ENCODE measurements at regions of chr15 and their contacts with region 1.

Region 1: DNA sequence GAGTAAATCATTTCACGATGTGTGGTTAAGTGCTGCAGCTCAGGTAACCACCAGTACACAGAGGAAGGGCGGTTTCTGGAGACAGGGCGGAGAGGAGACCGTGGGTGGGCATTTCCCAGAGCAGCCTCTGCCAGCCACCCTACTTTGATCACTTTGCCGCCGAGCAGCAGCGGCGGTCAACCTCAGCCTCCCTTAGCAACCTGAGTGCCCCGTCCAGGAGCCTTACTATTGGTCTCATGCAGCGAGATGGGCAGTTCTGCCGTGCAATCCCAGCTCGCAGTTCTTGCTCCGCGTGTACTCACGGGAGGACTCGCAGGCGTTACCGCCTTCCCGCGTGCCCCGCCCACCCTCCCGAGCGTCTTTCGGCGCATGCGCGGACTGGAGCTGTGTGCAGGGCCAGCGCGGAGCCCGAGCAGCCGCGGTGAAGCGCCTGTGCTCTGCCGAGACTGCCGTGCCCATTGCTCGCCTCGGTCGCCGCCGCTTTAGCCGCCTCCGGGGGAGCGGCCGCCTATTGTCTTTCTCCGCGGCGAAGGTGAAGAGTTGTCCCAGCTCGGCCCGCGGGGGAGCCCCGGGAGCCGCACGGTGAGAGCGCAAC is at the start of gene AKAP13:
- DNase-seq: peak; percentile 95
- H3K4me3 Mint-ChIP-seq: peak within 1 kb of the TSS; percentile 88
- H3K27ac Mint-ChIP-seq: peak within 1 kb of the TSS; percentile 86
- H3K4me1 Mint-ChIP-seq: peaks cover 48% of the 10 kb centered on the region
- H3K27me3 Mint-ChIP-seq: peaks cover 6% of the 10 kb centered on the region
- total RNA-seq, gene AKAP13: 92.1 and 107 TPM in 2 replicates

Region 2: GRCh38 chr15:85318048-85318731 is 62.1 kb before region 1 on chr15:
- intact Hi-C with region 1: loop called (anchors 2 kb)
- DNase-seq: peak; percentile 55
- H3K4me3 Mint-ChIP-seq: peak overlapping the region; percentile 41
- H3K27ac Mint-ChIP-seq: peak overlapping the region; percentile 91
- H3K4me1 Mint-ChIP-seq: peaks cover 66% of the 10 kb centered on the region
- H3K27me3 Mint-ChIP-seq: no peaks in the 10 kb centered on the region

Region 3: DNA sequence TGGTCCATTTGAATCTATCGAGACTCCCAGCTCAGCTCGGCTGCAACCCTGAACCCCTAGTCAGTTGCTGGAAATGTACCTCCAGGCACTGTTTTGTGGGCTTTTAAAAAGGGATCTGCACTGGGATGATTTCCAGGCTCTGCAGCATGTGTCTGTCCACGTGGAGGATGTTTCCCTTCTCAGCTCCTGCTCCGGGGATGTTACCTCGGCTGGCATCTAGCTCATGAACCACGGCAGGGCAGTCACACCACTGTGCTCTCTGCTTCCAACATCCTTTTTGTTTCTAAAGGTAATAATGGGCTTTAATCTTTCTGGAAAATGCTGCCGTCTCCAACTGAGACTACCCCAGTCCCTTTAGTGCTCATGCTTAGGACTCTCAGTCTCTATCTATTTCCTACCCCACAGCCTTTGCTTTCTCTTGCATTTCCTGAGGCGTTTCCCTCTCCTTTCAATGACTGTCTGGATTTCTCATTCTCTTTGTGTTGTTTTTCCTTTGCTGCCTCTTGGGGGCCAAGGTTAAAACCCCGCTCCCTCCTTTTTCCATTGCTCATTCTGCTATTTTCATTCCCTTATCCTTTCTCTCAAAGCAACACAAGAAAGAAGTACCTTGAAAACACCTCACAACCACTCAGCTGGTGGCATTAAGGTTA is 42.8 kb before region 1 on chr15:
- intact Hi-C with region 1: no loop called
- DNase-seq: no peak
- H3K4me3 Mint-ChIP-seq: no peak overlapping the region
- H3K27ac Mint-ChIP-seq: no peak overlapping the region
- H3K4me1 Mint-ChIP-seq: peaks cover 7% of the 10 kb centered on the region
- H3K27me3 Mint-ChIP-seq: no peaks in the 10 kb centered on the region

Region 4: DNA sequence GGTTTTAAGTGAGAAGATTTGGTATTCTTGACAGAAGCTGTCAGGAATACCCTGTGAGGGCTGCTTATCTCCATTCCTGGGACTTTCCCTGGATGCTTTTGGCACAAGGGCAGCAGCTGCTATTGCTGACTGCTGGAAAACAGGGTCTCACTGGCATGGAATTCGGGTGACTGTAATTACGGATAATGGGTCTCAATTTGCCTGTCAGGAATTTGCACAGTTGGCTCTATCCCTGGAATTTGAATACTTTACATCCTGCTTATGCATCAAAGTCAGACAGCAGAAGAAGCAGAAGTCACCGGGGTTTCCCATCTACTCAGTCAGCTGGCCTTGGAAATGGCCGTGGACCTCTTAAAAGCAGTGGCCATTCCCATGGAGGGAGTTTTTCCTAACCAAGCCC is 25.9 kb before region 1 on chr15:
- intact Hi-C with region 1: loop called (anchors 1 kb)
- DNase-seq: no peak
- H3K4me3 Mint-ChIP-seq: no peak overlapping the region
- H3K27ac Mint-ChIP-seq: no peak overlapping the region
- H3K4me1 Mint-ChIP-seq: peaks cover 19% of the 10 kb centered on the region
- H3K27me3 Mint-ChIP-seq: peaks cover 3% of the 10 kb centered on the region

Region 5: DNA sequence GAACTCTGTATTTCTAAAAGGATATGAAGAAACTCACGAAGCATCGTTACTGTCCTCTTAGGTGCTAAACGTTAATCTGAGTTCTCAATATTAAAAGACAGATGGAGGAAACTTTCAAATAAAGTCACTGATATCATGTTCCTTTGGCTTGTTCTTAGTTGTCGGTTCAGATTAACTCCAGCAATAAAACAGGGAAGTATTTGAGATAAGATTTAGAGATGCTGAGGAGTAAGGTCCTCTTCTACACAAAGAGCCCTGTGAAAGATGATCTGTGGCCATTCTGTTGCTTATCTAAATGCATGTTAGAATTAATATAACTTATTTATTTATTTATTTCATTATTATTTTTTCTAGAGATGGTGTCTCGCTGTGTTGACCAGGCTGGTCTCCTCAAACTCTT is 19.3 kb after region 1 on chr15:
- intact Hi-C with region 1: loop called (anchors 1 kb)
- DNase-seq: no peak
- H3K4me3 Mint-ChIP-seq: no peak overlapping the region
- H3K27ac Mint-ChIP-seq: no peak overlapping the region
- H3K4me1 Mint-ChIP-seq: peaks cover 37% of the 10 kb centered on the region
- H3K27me3 Mint-ChIP-seq: no peaks in the 10 kb centered on the region

Region 6: DNA sequence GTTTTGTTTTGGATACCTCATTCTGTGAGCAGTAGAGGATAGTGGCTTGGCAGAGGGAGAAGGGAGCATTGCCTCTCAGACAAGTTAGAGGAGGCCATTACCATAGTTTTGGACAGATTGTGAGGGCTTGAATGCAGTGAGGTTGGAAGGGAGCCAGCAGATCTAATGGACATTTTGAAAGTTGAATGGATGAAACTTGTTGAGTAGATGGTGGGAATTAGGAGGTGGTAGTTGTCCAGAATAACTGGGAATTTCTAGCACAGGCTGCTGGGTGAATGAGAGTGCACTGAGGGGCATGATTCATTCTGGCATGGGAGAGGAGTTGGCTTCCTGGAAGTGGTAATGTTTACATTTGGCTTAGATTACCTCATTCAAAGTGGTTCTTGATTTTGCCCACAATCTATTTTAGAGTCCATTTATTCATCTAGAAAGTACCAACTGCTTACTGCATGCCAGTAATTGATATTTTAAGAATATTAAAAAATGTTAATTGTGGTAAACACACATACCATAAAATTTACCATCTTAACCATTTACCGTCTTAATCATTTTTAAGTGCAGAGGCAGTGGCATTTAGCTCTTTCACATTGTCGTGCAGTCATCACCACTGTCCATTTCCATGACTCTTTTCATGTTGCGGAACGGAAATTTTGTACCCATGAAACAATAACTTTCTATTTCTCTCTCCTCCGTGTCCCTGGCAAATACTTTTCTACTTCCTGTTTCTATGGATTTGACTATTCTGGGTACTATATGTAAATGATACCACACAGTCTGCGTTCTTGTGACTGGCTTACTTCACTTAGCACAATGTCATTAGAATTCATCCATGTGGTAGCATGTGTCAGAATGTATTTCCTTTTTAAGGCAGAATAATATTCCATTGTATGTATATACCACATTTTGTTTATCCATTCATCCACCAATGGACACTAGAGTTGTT is 27.8 kb after region 1 on chr15:
- intact Hi-C with region 1: loop called (anchors 1 kb)
- DNase-seq: no peak
- H3K4me3 Mint-ChIP-seq: peak overlapping the region; percentile 54
- H3K27ac Mint-ChIP-seq: peak overlapping the region; percentile 89
- H3K4me1 Mint-ChIP-seq: peaks cover 69% of the 10 kb centered on the region
- H3K27me3 Mint-ChIP-seq: no peaks in the 10 kb centered on the region

Region 7: DNA sequence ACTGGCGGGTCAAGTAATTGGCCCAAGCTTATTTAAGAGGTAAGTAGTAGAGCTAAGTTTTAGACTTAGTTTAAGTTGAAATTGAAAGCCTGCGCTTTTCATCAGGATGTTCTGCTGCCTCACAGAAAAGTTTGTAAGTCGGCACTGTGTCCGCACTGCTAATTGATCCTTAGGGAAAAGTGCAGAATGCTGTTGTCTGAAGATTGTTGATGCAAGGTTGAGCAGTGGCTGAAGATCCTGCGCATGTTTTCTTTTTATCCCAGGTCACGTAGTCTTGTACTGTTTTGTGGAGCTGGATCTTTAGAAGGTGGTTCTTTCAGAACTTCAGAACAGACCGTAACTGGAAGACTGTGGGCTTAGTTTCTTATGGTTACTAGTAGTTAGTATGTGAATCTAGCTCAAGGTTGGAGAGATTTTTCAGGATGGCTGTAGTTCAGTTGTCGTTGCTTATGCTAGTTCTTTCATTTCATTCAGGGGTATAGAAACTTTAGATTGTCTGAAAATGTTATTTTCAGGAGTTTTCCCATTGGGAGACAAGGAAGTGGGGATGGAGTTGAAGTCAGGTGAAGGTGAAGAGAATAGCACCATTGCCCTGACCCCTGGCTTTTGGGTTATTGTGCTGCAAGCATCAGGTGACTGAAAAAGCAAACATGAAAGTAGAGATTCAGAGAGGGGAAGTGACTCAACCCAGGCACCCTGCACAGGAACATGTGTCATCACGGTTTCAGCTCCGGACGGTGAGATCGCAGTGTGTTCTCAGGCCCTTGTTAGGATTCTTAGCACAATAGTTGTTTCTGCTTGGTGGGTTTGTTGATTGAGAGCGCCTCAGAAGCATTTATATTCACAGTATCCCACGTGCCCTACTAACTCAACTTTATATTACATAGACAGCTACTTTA is 32.9 kb after region 1 on chr15:
- intact Hi-C with region 1: loop called (anchors 1 kb)
- DNase-seq: peak; percentile 71
- H3K4me3 Mint-ChIP-seq: peak overlapping the region; percentile 55
- H3K27ac Mint-ChIP-seq: peak overlapping the region; percentile 87
- H3K4me1 Mint-ChIP-seq: peaks cover 64% of the 10 kb centered on the region
- H3K27me3 Mint-ChIP-seq: no peaks in the 10 kb centered on the region